B cell (primary cell): ENCODE measurements at regions of chr3 and their contacts with region 1.

Region 1: DNA sequence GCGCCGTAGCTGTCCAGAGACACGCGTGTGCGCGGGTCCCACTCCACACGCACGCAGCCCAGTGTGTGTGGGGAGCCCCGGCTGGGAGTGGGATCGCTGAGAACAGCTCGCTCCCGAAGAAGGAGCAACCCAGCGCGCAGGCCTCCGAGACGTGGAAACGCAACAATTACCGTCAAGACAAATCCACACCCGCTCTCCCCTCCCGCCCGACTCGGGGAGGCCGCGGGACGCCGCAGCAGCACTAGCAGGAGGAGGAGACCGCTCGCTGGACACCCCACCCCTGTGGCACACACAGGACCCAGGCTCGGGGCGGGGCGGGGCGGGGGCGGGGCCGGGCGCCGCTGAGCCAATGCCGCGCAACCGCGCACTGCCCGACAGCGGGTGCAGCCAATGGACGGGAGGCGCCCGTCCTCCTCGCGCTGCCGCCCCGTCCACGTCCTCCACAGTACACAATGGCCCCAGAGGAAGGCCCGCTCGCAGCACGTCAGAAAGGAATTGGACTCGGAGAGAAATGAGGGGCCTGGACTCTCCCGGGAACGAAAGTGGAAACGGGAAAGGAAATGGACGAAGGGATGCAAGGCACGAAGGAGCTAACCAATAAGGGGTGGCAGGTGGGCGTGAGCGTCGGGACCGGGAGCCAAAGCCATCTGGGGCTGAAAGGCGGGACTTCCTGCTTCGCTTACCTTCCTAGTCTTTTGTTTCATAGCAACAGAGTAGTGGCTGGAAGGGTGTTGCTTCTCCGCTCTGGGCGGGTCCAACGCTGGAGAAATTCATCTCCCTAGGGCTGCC is at the start of gene CBLB:
- DNase-seq: peak; percentile 93
- ATAC-seq: peak; percentile 90
- H3K4me3 ChIP-seq: peak within 1 kb of the TSS; percentile 72 to 100 (median 97)
- H3K4me3 Mint-ChIP-seq: peak within 1 kb of the TSS; percentile 93
- H3K27ac ChIP-seq: peak within 1 kb of the TSS; percentile 68 to 73
- H3K27ac Mint-ChIP-seq: peak within 1 kb of the TSS; percentile 96
- H3K4me1 ChIP-seq: peaks cover 24 to 32% of the 10 kb centered on the region in 2 donors
- H3K4me1 Mint-ChIP-seq: peaks cover 48% of the 10 kb centered on the region
- H3K27me3 ChIP-seq: no peaks in the 10 kb centered on the region
- H3K27me3 Mint-ChIP-seq: no peaks in the 10 kb centered on the region
- CTCF ChIP-seq: no peak
- total RNA-seq, gene CBLB: 135 and 144 TPM in 2 replicates

Region 2: GRCh38 chr3:105722943-105723556 is 145.9 kb before region 1 on chr3:
- CTCF ChIA-PET with region 1: no interaction called
- POLR2A ChIA-PET with region 1: no interaction called
- intact Hi-C with region 1: loop called (anchors 2 kb)
- DNase-seq: peak; percentile 77
- ATAC-seq: peak; percentile 96
- H3K4me3 ChIP-seq: peak overlapping the region in 1 of 5 experiments; percentile 29
- H3K4me3 Mint-ChIP-seq: peak overlapping the region; percentile 26
- H3K27ac ChIP-seq: peak overlapping the region in 1 of 2 donors; percentile 35
- H3K27ac Mint-ChIP-seq: peak overlapping the region; percentile 51
- H3K4me1 ChIP-seq: peaks cover 4 to 15% of the 10 kb centered on the region in 2 donors
- H3K4me1 Mint-ChIP-seq: peaks cover 18% of the 10 kb centered on the region
- H3K27me3 ChIP-seq: no peaks in the 10 kb centered on the region
- H3K27me3 Mint-ChIP-seq: no peaks in the 10 kb centered on the region
- CTCF ChIP-seq: no peak

Region 3: DNA sequence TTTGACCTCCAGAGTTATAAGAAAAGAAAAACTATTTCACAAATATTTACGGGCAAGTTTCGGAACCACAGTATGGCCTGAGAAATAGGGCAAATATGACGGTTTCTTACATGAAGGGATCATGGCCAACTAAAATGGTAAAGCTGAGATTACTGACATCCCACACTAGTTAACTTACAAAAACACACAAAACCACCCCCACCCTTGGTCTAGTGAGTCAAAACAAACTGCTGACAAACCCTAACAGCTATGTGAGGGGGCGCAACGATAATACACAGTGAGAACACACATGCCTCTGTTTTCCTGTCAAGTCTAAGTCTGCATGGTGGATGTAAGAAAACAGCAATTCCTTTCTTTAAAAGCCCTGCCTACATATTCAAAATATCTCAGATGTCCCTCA is 32.4 kb before region 1 on chr3:
- CTCF ChIA-PET with region 1: interaction called, 4 read pairs
- POLR2A ChIA-PET with region 1: interaction called, 7 read pairs
- intact Hi-C with region 1: loop called (anchors 1 kb)
- DNase-seq: no peak
- ATAC-seq: no peak
- H3K4me3 ChIP-seq: peak overlapping the region in 4 of 5 experiments; percentile 10 to 61 (median 29)
- H3K4me3 Mint-ChIP-seq: peak overlapping the region; percentile 83
- H3K27ac ChIP-seq: peak overlapping the region in 1 of 2 donors; percentile 39
- H3K27ac Mint-ChIP-seq: peak overlapping the region; percentile 48
- H3K4me1 ChIP-seq: peaks cover 22 to 46% of the 10 kb centered on the region in 2 donors
- H3K4me1 Mint-ChIP-seq: peaks cover 57% of the 10 kb centered on the region
- H3K27me3 ChIP-seq: no peaks in the 10 kb centered on the region
- H3K27me3 Mint-ChIP-seq: no peaks in the 10 kb centered on the region
- CTCF ChIP-seq: no peak

Region 4: DNA sequence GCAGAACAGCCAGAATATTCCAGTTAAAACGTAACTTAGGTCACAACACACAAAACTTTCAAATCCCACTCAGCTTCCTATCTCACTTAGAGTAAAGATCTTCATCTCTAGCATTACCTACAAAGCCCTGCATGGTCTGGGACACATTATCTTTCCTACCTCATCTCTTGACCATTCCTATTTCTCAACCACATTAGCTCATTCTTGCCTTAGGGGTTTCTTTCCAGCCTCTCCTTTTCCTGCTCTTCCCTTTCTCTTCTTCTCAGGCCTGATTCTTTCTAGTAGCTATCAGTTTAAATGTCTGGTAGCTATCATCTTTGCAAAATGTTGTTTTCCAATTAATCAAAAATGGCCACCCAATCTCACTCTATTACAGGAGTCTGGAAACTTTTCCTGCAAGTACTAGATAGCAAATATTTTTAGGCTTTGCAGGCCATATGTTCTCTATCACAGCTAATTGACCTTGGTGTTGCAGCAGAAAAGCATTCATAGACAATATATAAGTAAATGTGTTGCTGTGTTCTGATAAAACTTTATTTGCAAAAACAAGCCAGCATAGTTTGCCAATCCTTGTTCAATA is 15.0 kb after region 1 on chr3:
- CTCF ChIA-PET with region 1: interaction called, 3 read pairs
- POLR2A ChIA-PET with region 1: no interaction called
- intact Hi-C with region 1: loop called (anchors 2 kb)
- DNase-seq: no peak
- ATAC-seq: no peak
- H3K4me3 ChIP-seq: no peak overlapping the region
- H3K4me3 Mint-ChIP-seq: no peak overlapping the region
- H3K27ac ChIP-seq: no peak overlapping the region
- H3K27ac Mint-ChIP-seq: no peak overlapping the region
- H3K4me1 ChIP-seq: peaks cover 0 to 3% of the 10 kb centered on the region in 2 donors
- H3K4me1 Mint-ChIP-seq: peaks cover 3% of the 10 kb centered on the region
- H3K27me3 ChIP-seq: no peaks in the 10 kb centered on the region
- H3K27me3 Mint-ChIP-seq: no peaks in the 10 kb centered on the region
- CTCF ChIP-seq: no peak

Region 5: GRCh38 chr3:106255870-106256248 is 386.9 kb after region 1 on chr3:
- CTCF ChIA-PET with region 1: no interaction called
- POLR2A ChIA-PET with region 1: no interaction called
- intact Hi-C with region 1: loop called (anchors 2 kb)
- DNase-seq: peak; percentile 83
- ATAC-seq: peak; percentile 97
- H3K4me3 ChIP-seq: peak overlapping the region in 4 of 5 experiments; percentile 59 to 71 (median 64)
- H3K4me3 Mint-ChIP-seq: peak overlapping the region; percentile 74
- H3K27ac ChIP-seq: peak overlapping the region; percentile 84 to 85
- H3K27ac Mint-ChIP-seq: peak overlapping the region; percentile 90
- H3K4me1 ChIP-seq: peaks cover 25 to 31% of the 10 kb centered on the region in 2 donors
- H3K4me1 Mint-ChIP-seq: peaks cover 38% of the 10 kb centered on the region
- H3K27me3 ChIP-seq: no peaks in the 10 kb centered on the region
- H3K27me3 Mint-ChIP-seq: no peaks in the 10 kb centered on the region
- CTCF ChIP-seq: no peak